ENCODE measurements at regions of chr3 and their contacts with region 1.

Region 1: GRCh38 chr3:94004301-94004910 is 24.0 kb downstream of the STX19 start:
- DNase-seq: no peak
- H3K4me3 ChIP-seq: peak overlapping the region in 2 of 8 donors; percentile 10 to 19
- H3K27ac ChIP-seq: no peak overlapping the region
- H3K4me1 ChIP-seq: peaks cover 0 to 13% (median 4%) of the 10 kb centered on the region in 6 donors
- H3K27me3 ChIP-seq: no peaks in the 10 kb centered on the region
- CTCF ChIP-seq: peak; percentile 34 to 84 (median 74)
- POLR2A ChIP-seq: no peak

Region 2: DNA sequence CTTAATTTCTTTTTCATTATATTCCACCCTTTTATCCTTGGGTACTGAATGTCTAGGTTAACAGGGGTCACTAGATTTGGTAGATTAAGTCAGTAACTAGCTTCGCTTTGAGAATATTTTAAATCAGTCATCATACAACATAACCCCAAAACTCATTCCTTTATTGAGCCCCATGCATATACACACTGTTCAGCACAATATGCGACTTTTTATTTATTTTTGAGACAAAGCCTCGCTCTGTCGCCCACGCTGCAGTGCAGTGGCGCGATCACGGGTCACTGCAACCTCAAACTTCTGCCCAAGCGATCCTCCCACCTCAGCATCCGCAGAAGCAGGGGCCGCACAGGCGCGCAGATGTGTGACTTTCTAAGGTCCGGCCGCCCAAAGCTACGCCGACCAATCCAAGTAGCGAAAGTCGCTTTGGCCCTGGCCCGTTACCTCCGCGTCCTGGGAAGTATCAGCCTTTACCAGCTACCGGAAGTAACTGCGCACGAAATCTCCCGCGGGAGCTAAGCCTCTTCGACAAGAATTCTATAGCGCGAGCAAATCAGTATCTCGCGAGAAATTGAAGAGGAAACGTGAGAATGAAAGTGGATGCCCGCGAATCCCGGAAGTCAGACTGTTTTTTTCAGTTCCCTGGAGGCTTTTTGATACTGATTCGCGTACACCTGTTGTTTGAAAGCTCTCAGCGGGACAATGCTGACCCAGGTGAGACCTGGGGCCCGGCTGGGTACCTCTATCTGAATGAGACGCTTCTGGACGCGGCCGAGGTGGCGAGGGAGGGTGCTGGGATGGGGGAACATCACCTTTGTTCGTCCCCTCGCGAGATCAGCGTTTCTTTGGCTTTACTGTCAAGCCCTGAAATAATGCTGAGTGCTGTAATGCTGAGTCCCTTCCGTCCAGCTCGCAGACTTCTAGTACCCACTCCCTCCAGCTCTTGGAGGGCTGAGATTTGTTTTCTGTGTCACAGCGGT is 58.3 kb after region 1 on chr3 and contains the starts of genes DHFR2 and NSUN3:
- intact Hi-C with region 1: loop called (anchors 10 kb)
- DNase-seq: peak; percentile 95
- H3K4me3 ChIP-seq: peak within 1 kb of the TSS; percentile 59 to 88 (median 65)
- H3K27ac ChIP-seq: peak within 1 kb of the TSS; percentile 93 to 98 (median 97)
- H3K4me1 ChIP-seq: peaks cover 25 to 57% (median 43%) of the 10 kb centered on the region in 6 donors
- H3K27me3 ChIP-seq: no peaks in the 10 kb centered on the region
- CTCF ChIP-seq: peak in 4 of 11 experiments; percentile 37 to 50 (median 44)
- POLR2A ChIP-seq: peak in 1 of 3 donors; percentile 47
- total RNA-seq, gene DHFR2: 4.6 to 9.6 (median 5.9) TPM
- total RNA-seq, gene NSUN3: 18.4 to 28.5 (median 22.9) TPM

Region 3: DNA sequence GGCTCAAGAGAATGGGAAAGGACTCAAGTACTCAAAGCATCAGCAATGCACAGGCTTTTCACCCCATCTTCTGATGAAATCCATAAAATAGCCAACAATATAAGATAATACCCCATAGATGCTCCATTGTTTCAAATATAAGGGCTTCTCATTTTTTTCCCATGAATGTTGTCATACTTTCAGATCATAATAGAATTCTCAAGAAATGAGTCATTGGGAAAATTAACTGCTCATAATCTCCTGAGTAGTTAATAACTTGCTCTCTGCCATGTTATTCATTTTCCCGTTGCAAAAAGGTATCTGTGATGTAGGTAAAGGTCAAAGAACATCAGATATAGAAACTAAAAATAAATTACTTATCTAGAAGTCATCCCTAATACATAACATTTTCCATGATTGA is 180.4 kb after region 1 on chr3:
- intact Hi-C with region 1: no loop called
- DNase-seq: no peak
- H3K4me3 ChIP-seq: no peak overlapping the region
- H3K27ac ChIP-seq: no peak overlapping the region
- H3K4me1 ChIP-seq: no peaks in the 10 kb centered on the region
- H3K27me3 ChIP-seq: no peaks in the 10 kb centered on the region
- CTCF ChIP-seq: no peak
- POLR2A ChIP-seq: no peak